IMR-90 (cell line): ENCODE measurements at regions of chr4 and their contacts with region 1.

Region 1: GRCh38 chr4:89123451-89123851 is 12.1 kb downstream of the TIGD2 start:
- DNase-seq: peak; percentile 41
- ATAC-seq: peak; percentile 34
- H3K4me3 ChIP-seq: no peak overlapping the region
- H3K27ac ChIP-seq: no peak overlapping the region
- H3K4me1 ChIP-seq: peaks cover 13% of the 10 kb centered on the region
- H3K27me3 ChIP-seq: peaks cover 2% of the 10 kb centered on the region; the same call in 1 of the 2 replicates
- CTCF ChIP-seq: no peak
- POLR2A ChIP-seq: no peak
- RAD21 ChIP-seq: no peak

Region 2: GRCh38 chr4:88569939-88570455 is 553.5 kb before region 1 on chr4:
- CTCF ChIA-PET with region 1: no interaction called
- POLR2A ChIA-PET with region 1: interaction called, 10 read pairs
- dilution Hi-C with region 1: no loop called
- in situ Hi-C with region 1: no loop called
- intact Hi-C with region 1: no loop called
- DNase-seq: no peak
- ATAC-seq: peak; percentile 62
- H3K4me3 ChIP-seq: no peak overlapping the region
- H3K27ac ChIP-seq: no peak overlapping the region
- H3K4me1 ChIP-seq: peaks cover 6% of the 10 kb centered on the region
- H3K27me3 ChIP-seq: no peaks in the 10 kb centered on the region
- CTCF ChIP-seq: no peak
- POLR2A ChIP-seq: no peak
- RAD21 ChIP-seq: no peak